ENCODE measurements at regions of chr2 and their contacts with region 1.

Region 1: GRCh38 chr2:128027801-128028667 is at the start of gene SAP130:
- DNase-seq: peak; percentile 99
- H3K4me3 Mint-ChIP-seq: peak within 1 kb of the TSS; percentile 99
- H3K27ac Mint-ChIP-seq: peak within 1 kb of the TSS; percentile 93
- H3K4me1 Mint-ChIP-seq: peaks cover 23% of the 10 kb centered on the region
- H3K27me3 Mint-ChIP-seq: peaks cover 4% of the 10 kb centered on the region
- total RNA-seq, gene SAP130: 30.9 and 31.5 TPM in 2 replicates

Region 2: GRCh38 chr2:127086990-127087790 is 940.8 kb before region 1 on chr2:
- intact Hi-C with region 1: loop called (anchors 10 kb)
- DNase-seq: no peak
- H3K4me3 Mint-ChIP-seq: no peak overlapping the region
- H3K27ac Mint-ChIP-seq: no peak overlapping the region
- H3K4me1 Mint-ChIP-seq: peaks cover 39% of the 10 kb centered on the region
- H3K27me3 Mint-ChIP-seq: peaks cover 2% of the 10 kb centered on the region

Region 3: GRCh38 chr2:127293748-127294562 is 734.1 kb before region 1 on chr2 and contains the start of gene ERCC3:
- intact Hi-C with region 1: loop called (anchors 1 kb)
- DNase-seq: peak; percentile 76
- H3K4me3 Mint-ChIP-seq: peak within 1 kb of the TSS; percentile 99
- H3K27ac Mint-ChIP-seq: peak within 1 kb of the TSS; percentile 98
- H3K4me1 Mint-ChIP-seq: peaks cover 23% of the 10 kb centered on the region
- H3K27me3 Mint-ChIP-seq: no peaks in the 10 kb centered on the region
- total RNA-seq, gene ERCC3: 63.1 and 65.5 TPM in 2 replicates

Region 4: DNA sequence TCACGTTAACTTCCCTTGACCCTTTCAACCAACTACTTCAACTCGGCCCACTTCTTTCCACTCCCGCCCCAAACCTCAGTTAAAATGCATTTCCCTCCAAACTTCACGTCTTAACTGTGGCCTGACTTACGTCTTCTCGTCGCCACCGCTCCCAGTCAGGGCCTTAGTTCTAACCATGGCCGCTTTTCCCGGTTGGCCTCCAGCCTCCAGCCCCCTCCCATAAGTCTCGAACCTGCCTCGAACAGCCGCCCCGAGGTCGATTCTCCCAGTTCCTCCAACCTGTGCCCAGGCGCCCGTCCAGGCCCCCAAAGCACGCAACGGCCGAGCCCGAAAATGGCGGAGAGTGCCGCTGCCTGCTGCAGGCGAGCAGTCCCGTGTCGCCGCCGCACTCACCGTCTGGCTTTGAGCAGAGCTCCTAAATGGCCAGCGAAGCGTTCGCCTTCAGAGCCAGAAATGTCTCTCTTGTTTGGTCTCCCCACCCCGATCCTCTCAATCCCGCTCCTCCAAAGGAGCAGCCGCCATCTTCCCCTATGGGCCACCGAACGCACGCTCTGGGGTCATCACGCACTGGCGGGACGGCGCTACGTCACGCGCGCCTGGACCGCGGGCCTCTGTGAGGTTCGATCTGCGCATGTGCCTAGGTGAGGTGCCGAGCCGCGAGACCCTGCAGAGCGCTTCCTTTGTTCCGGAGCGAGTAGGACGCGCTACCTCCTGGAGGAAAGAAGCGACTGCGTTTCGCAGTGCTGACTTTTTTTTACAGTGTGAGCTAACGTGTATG is 217.2 kb before region 1 on chr2 and contains the start of gene WDR33:
- intact Hi-C with region 1: loop called (anchors 1 kb)
- DNase-seq: peak; percentile 94
- H3K4me3 Mint-ChIP-seq: peak within 1 kb of the TSS; percentile 95
- H3K27ac Mint-ChIP-seq: peak within 1 kb of the TSS; percentile 94
- H3K4me1 Mint-ChIP-seq: peaks cover 42% of the 10 kb centered on the region
- H3K27me3 Mint-ChIP-seq: peaks cover 6% of the 10 kb centered on the region
- total RNA-seq, gene WDR33: 81.0 and 82.4 TPM in 2 replicates

Region 5: DNA sequence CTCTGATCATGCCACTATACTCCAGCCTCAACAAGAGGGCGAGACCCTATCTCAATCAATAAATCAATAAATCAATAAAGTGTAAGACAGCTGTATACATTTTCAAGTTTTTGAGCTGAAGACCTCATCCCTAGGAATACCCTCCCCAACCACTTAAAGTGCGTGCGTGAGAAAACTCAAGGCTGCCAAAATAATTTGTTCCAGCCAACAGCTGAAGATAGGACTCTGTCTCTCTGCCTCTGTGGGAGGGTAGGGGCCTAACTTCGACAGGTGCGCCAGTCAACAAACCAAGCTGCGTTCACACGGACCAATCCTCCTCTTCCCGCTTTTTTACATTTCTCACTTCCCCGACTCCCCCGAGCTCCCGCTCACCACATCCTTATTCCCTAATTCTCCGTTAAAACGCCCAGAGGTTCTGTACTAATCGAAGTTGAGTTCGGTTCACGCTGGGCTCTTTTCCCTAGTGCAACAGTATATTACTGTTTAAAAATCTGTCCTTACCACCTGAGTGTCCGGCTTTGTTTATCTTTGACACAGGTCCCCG is 170.7 kb before region 1 on chr2:
- intact Hi-C with region 1: loop called (anchors 1 kb)
- DNase-seq: no peak
- H3K4me3 Mint-ChIP-seq: peak overlapping the region; percentile 92
- H3K27ac Mint-ChIP-seq: peak overlapping the region; percentile 78
- H3K4me1 Mint-ChIP-seq: peaks cover 32% of the 10 kb centered on the region
- H3K27me3 Mint-ChIP-seq: no peaks in the 10 kb centered on the region

Region 6: DNA sequence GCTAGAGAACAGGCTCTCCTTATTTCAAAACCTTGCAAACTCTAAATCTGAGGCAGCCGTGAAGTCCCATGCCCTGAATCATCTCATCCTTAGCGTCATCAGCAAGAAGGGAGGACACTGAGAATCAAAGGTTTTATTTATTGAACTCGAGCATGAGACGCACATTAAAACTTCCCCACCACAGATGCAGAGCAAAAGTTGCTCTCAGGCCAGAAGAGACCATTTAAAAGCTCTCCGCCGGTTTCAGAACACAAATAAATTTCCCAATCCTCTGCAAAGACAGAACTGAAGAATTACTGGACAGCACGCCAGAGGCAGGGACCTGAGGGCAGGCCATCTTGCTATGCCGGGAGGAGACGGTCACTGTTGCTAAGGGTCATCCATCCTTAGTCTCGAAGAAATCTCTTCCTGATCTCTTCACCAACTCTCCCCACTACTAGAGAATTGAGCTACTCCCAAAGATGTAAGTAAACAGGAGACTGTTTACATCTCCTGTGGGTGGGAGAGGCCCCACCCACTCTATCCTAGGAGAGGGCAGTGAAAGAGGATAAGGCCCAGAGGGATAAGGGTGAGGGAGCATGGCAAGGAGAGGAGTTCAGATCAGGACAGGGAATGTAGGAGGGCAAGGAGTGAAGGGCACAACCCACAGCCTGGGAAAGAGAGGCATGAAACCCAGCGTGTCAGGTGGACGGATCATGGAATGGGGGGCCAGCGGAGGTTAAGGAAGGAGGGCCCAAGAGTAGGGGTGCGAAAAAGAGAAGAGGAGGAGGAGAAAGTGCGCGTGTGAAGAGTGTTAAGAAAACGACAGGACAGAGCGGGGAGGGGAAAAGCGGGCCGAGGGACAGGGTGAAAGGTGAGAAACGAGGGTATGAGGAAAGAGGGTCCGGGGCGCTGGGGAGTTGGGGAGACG is 143.3 kb before region 1 on chr2:
- intact Hi-C with region 1: loop called (anchors 2 kb)
- DNase-seq: no peak
- H3K4me3 Mint-ChIP-seq: peak overlapping the region; percentile 98
- H3K27ac Mint-ChIP-seq: peak overlapping the region; percentile 95
- H3K4me1 Mint-ChIP-seq: peaks cover 45% of the 10 kb centered on the region
- H3K27me3 Mint-ChIP-seq: no peaks in the 10 kb centered on the region

Region 7: GRCh38 chr2:128090945-128091725 is 63.1 kb after region 1 on chr2 and contains the start of gene UGGT1:
- intact Hi-C with region 1: loop called (anchors 1 kb)
- DNase-seq: peak; percentile 93
- H3K4me3 Mint-ChIP-seq: peak within 1 kb of the TSS; percentile 87
- H3K27ac Mint-ChIP-seq: peak within 1 kb of the TSS; percentile 85
- H3K4me1 Mint-ChIP-seq: peaks cover 38% of the 10 kb centered on the region
- H3K27me3 Mint-ChIP-seq: peaks cover 7% of the 10 kb centered on the region
- total RNA-seq, gene UGGT1: 65.2 and 70.7 TPM in 2 replicates

Measured in activated T-helper 1 cell treated with anti-CD3 and anti-CD28 coated beads, Interleukin-12 subunit alpha, Interleukin-12 subunit beta, Interleukin-2, Interleukin-4 antibody, amounts not matched to agents 30 ng/mL and 10 ng/mL and 1 ng/mL, durations not matched to agents 14 hours and 24 hours and 36 hours (primary cell).